ENCODE measurements at regions of chr11 and their contacts with region 1.

Region 1: GRCh38 chr11:22466809-22467208 is 128.6 kb downstream of the SLC17A6 start:
- DNase-seq: peak; percentile 95
- H3K4me3 ChIP-seq: no peak overlapping the region
- H3K27ac ChIP-seq: peak overlapping the region; percentile 69
- H3K4me1 ChIP-seq: peaks cover 22% of the 10 kb centered on the region
- H3K27me3 ChIP-seq: no peaks in the 10 kb centered on the region
- CTCF ChIP-seq: no peak

Region 2: DNA sequence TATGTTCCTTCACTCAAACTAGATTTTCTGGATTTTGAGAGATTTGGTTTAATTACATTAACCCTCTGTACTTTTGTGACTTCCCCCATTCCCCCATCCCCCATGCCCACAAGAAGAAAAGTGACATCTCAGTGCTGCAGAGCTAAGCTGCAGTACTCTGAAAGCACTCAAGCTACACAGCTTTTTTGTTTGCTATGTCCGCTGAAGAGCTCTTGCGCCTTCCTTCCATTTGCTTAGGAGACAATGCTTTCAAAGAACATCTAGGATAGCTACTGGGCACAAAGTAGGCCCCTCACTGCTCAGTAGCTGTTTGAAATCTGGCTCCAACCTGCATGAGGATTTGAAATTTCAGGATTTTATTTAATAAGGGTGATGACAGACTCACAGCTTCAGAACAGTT is 58.9 kb before region 1 on chr11:
- CTCF ChIA-PET with region 1: no interaction called
- dilution Hi-C with region 1: no loop called
- in situ Hi-C with region 1: no loop called
- intact Hi-C with region 1: no loop called
- DNase-seq: no peak
- H3K4me3 ChIP-seq: no peak overlapping the region
- H3K27ac ChIP-seq: no peak overlapping the region
- H3K4me1 ChIP-seq: no peaks in the 10 kb centered on the region
- H3K27me3 ChIP-seq: no peaks in the 10 kb centered on the region
- CTCF ChIP-seq: no peak

Region 3: DNA sequence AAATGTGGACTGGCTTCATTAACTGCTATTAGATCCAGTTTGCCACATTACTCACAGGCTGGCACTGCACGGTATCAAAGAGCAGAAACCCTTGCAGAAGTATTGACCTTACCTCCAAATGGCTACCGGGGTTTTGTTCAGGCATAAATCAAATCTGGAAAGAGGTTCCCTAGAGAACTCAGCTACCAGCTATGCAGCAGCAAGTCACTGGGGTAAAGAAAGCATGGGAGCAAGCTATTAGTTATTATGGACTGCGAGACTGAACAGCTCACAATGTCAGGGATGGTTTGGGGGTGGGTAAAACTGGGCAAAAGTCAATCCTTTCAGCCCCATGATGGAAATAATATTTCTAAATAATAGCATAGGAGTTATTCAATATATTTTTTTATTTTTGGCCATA is 30.7 kb after region 1 on chr11:
- CTCF ChIA-PET with region 1: no interaction called
- dilution Hi-C with region 1: no loop called
- in situ Hi-C with region 1: no loop called
- intact Hi-C with region 1: no loop called
- DNase-seq: no peak
- H3K4me3 ChIP-seq: no peak overlapping the region
- H3K27ac ChIP-seq: no peak overlapping the region
- H3K4me1 ChIP-seq: no peaks in the 10 kb centered on the region
- H3K27me3 ChIP-seq: no peaks in the 10 kb centered on the region
- CTCF ChIP-seq: no peak

Region 4: GRCh38 chr11:22510741-22511140 is 43.9 kb after region 1 on chr11:
- CTCF ChIA-PET with region 1: no interaction called
- dilution Hi-C with region 1: no loop called
- in situ Hi-C with region 1: loop called in 1 of 2 experiments (anchors 10 kb)
- intact Hi-C with region 1: loop called (anchors 2 kb)
- DNase-seq: peak; percentile 91
- H3K4me3 ChIP-seq: no peak overlapping the region
- H3K27ac ChIP-seq: peak overlapping the region; percentile 67
- H3K4me1 ChIP-seq: peaks cover 10% of the 10 kb centered on the region
- H3K27me3 ChIP-seq: no peaks in the 10 kb centered on the region
- CTCF ChIP-seq: no peak

Region 5: GRCh38 chr11:22567759-22568158 is 101.0 kb after region 1 on chr11:
- CTCF ChIA-PET with region 1: no interaction called
- dilution Hi-C with region 1: no loop called
- in situ Hi-C with region 1: no loop called
- intact Hi-C with region 1: no loop called
- DNase-seq: no peak
- H3K4me3 ChIP-seq: no peak overlapping the region
- H3K27ac ChIP-seq: no peak overlapping the region
- H3K4me1 ChIP-seq: no peaks in the 10 kb centered on the region
- H3K27me3 ChIP-seq: peaks cover 2% of the 10 kb centered on the region
- CTCF ChIP-seq: no peak